Naive thymus-derived CD4-positive, alpha-beta T cell (primary cell): ENCODE measurements at regions of chr19 and their contacts with region 1.

Region 1: DNA sequence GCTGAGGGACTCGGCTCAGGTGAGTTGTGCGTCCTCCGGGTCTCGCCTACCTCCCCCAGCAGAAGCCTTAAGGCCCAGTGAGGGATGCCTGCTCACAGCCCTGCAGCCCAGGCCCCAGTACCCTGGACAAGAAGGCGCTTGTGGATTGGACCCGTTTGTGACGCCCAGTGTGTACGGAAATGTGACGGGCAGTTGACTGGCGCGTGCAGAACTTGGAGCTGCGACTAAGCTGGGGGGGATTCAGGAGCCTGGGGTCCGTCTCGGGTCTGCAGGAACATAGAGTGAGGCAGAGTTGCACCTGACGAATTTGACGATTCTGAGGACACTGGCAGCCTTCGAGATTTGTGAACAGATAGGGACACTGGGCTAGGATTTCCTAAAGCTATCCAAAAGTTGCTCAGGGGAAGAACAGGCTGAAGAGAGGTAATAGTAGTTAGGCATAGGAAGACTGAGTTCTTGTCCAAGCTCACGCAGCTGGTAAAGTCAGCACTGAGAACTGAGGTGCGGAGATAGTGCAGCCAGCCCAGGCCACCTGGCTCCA is 519 bp downstream of the ZNF551 start:
- DNase-seq: no peak
- ATAC-seq: no peak
- H3K4me3 ChIP-seq: peak overlapping the region; percentile 93
- H3K4me3 Mint-ChIP-seq: peak overlapping the region; percentile 89 to 99 (median 97)
- H3K27ac ChIP-seq: peak overlapping the region; percentile 80
- H3K27ac Mint-ChIP-seq: peak overlapping the region; percentile 90 to 98 (median 96)
- H3K4me1 ChIP-seq: peaks cover 9 to 13% of the 10 kb centered on the region in 2 donors
- H3K4me1 Mint-ChIP-seq: peaks cover 25 to 46% (median 39%) of the 10 kb centered on the region in 7 donors
- H3K27me3 ChIP-seq: no peaks in the 10 kb centered on the region
- H3K27me3 Mint-ChIP-seq: peaks cover 2 to 8% (median 7%) of the 10 kb centered on the region in 5 donors

Region 2: GRCh38 chr19:56507446-56508289 is 1174.6 kb before region 1 on chr19 and contains the start of gene ZNF471:
- CTCF ChIA-PET with region 1: no interaction called
- POLR2A ChIA-PET with region 1: no interaction called
- intact Hi-C with region 1: no loop called
- DNase-seq: peak; percentile 44 to 93 (median 82)
- ATAC-seq: peak; percentile 99
- H3K4me3 ChIP-seq: peak within 1 kb of the TSS; percentile 42
- H3K4me3 Mint-ChIP-seq: no peak within 1 kb of the TSS
- H3K27ac ChIP-seq: peak within 1 kb of the TSS; percentile 85
- H3K27ac Mint-ChIP-seq: peak within 1 kb of the TSS in 3 of 9 donors; percentile 3 to 81 (median 10)
- H3K4me1 ChIP-seq: peaks cover 0 to 5% of the 10 kb centered on the region in 2 donors
- H3K4me1 Mint-ChIP-seq: peaks cover 0 to 10% (median 6%) of the 10 kb centered on the region in 7 donors
- H3K27me3 ChIP-seq: no peaks in the 10 kb centered on the region
- H3K27me3 Mint-ChIP-seq: peaks cover 0 to 15% (median 0%) of the 10 kb centered on the region in 5 donors
- total RNA-seq, gene ZNF471: 0.22 to 2.3 (median 1.6) TPM

Region 3: DNA sequence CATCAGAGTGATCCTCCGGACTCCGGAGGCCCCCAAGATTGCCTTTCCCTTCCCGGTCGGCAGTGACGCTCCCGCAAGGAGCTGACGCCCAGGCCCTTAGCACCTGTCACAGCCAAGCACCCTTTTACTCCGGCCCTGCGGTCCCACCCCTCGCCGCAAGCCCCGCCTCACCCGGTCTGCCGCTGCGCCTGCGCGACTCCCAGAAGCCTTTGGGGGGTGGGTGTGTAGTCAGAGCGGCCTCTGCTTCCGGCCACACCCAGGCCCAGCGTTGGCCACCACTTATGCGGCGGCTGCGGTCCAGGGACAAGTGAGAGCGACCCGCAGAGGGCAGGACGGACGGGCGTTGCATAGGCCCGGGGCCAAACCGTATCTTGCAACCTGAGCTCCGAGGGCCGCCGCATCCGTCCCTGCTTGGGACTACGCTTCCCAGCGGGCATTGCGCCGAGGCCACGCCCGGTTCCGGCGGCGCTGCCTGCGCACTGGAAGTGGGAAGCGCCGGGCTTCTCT is 1144.0 kb before region 1 on chr19:
- CTCF ChIA-PET with region 1: no interaction called
- POLR2A ChIA-PET with region 1: no interaction called
- intact Hi-C with region 1: loop called in 1 of 2 experiments (anchors 5 kb)
- DNase-seq: peak; percentile 84 to 94 (median 89)
- ATAC-seq: peak; percentile 94
- H3K4me3 ChIP-seq: peak overlapping the region; percentile 87
- H3K4me3 Mint-ChIP-seq: peak overlapping the region; percentile 88 to 95 (median 93)
- H3K27ac ChIP-seq: peak overlapping the region; percentile 83
- H3K27ac Mint-ChIP-seq: peak overlapping the region; percentile 90 to 97 (median 94)
- H3K4me1 ChIP-seq: peaks cover 5% of the 10 kb centered on the region in 2 donors
- H3K4me1 Mint-ChIP-seq: peaks cover 13 to 27% (median 21%) of the 10 kb centered on the region in 7 donors
- H3K27me3 ChIP-seq: no peaks in the 10 kb centered on the region
- H3K27me3 Mint-ChIP-seq: peaks cover 0 to 4% (median 0%) of the 10 kb centered on the region in 5 donors

Region 4: DNA sequence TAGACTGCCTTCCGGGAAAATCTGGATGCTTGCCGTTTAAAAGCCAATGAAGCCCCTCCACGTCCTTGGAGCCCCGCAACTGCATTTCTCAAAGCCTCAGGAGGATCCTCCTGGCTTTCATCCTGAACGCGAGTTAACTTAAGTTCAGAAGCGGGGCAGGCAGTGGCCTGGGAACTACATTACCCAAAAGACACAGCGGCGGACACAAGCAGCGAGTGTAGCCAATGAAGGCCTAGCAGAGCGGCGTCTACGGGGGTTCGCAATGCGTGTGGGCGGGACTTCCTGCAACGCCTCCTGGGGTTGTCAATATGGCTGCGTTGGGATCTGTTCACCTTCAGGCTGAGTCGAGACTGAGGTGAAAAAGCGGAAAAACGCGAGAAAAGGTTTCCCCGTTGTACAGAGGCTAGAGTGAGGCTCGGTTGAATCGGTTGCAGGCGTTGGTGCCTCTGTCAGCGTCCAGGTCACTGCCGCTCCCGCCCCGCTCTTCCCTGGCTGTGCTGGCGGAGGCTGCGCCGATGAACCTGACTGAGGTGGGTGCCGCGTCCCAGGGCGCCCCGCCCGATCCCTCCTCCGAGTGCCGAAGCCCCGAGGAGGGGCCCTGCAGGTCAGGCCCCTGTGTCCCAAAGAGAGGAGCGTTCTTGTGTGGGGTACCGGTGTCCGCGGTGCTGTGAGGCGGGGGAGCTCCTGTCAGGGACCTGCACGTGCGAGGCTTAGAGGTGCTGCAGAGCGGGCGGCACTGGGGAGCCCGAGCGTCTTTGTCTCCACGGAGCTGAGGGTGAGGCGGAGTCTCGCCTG is 271.2 kb before region 1 on chr19 and contains the start of gene ZNF17:
- CTCF ChIA-PET with region 1: no interaction called
- POLR2A ChIA-PET with region 1: no interaction called
- intact Hi-C with region 1: loop called in 1 of 2 experiments (anchors 1 kb)
- DNase-seq: peak; percentile 72 to 95 (median 88)
- ATAC-seq: peak; percentile 100
- H3K4me3 ChIP-seq: peak within 1 kb of the TSS; percentile 80
- H3K4me3 Mint-ChIP-seq: peak within 1 kb of the TSS; percentile 85 to 97 (median 96)
- H3K27ac ChIP-seq: peak within 1 kb of the TSS; percentile 80
- H3K27ac Mint-ChIP-seq: peak within 1 kb of the TSS; percentile 78 to 96 (median 92)
- H3K4me1 ChIP-seq: peaks cover 3 to 8% of the 10 kb centered on the region in 2 donors
- H3K4me1 Mint-ChIP-seq: peaks cover 20 to 46% (median 34%) of the 10 kb centered on the region in 7 donors
- H3K27me3 ChIP-seq: no peaks in the 10 kb centered on the region
- H3K27me3 Mint-ChIP-seq: no peaks in the 10 kb centered on the region
- total RNA-seq, gene ZNF17: 9.3 to 27.8 (median 17.2) TPM

Region 5: DNA sequence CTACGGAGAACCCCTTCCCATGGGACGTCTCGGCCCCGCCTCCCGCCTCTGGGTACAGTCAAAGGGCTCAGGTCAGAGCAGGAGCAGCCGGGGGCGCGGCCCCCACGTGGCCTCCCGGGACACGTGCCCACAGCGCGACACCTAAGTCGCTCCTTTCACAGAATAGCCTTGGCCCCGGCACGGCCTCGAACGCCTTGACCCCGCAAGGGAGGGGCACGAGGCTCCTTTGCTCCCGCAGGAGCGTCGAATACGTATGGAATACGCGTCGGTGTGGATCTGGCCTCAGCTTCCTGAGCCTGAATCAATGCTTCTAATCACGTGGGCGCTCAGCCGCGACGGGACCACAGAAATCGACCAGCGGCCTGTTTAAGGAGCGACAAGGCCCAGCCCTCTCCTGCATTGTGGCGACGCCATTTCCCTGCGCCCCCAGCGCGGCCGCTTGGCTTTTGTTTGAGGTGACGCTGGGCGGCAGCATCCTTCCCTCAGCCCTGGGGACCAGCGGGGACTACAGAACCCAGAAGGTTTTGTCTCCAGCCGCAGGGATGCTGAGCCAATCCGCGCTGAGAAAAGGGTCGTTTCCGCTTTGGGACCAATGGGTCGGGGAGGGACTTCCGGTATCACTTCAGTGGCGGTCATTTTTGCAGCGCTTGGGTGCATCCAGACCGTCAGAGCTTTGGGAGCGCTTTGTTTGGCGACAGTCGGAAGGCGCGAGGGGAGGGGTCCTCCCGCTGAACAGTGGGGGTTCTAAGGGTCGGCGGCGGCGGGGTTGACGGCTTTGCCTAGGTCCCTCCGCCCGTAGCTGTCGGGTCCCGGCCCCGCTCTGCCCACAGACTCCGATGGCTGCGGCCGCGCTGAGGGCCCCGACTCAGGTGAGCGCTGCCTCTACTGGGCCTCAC is 98.5 kb before region 1 on chr19 and contains the start of gene ZIK1:
- CTCF ChIA-PET with region 1: no interaction called
- POLR2A ChIA-PET with region 1: interaction called, 7 read pairs
- intact Hi-C with region 1: loop called in 1 of 2 experiments (anchors 1 kb)
- DNase-seq: peak; percentile 61 to 91 (median 85)
- ATAC-seq: peak; percentile 93
- H3K4me3 ChIP-seq: peak within 1 kb of the TSS; percentile 55
- H3K4me3 Mint-ChIP-seq: peak within 1 kb of the TSS; percentile 89 to 99 (median 94)
- H3K27ac ChIP-seq: peak within 1 kb of the TSS; percentile 45
- H3K27ac Mint-ChIP-seq: peak within 1 kb of the TSS; percentile 76 to 95 (median 90)
- H3K4me1 ChIP-seq: peaks cover 10 to 12% of the 10 kb centered on the region in 2 donors
- H3K4me1 Mint-ChIP-seq: peaks cover 12 to 28% (median 24%) of the 10 kb centered on the region in 7 donors
- H3K27me3 ChIP-seq: no peaks in the 10 kb centered on the region
- H3K27me3 Mint-ChIP-seq: no peaks in the 10 kb centered on the region
- total RNA-seq, gene ZIK1: 4.8 to 14.1 (median 7.0) TPM

Region 6: DNA sequence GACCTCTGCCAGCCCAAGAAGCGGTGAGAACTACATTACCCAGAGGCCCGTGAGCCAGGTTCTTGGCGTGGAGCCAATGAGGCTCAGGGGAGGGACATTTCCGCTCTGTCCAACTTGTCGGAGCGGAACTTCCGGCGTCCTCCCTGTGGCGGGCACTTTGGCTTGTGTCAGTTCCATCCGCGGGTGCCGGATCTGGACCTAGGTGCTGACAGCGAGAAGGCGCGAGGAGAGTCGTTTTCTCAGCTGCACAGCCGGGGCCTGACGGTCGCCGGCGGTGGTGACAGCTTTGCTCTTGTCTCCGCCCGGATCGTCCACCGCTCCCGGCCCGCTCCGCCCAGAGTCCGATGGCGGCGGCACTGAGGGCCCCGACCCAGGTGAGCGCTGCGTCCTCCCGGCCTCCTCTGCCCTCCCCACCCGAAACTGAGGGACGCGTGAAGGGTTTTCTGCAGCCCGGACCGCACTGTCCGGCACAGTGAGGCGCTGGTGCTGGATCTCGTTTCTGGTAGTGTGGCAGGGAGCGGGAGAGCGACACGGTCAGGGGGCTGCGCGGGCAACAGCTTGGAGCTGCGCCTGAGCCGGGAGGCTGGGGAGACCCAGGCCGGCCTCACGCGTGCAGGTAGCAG is 82.4 kb before region 1 on chr19 and contains the start of gene ZNF530:
- CTCF ChIA-PET with region 1: no interaction called
- POLR2A ChIA-PET with region 1: no interaction called
- intact Hi-C with region 1: no loop called
- DNase-seq: peak; percentile 61 to 81 (median 73)
- ATAC-seq: peak; percentile 97
- H3K4me3 ChIP-seq: peak within 1 kb of the TSS; percentile 87
- H3K4me3 Mint-ChIP-seq: peak within 1 kb of the TSS; percentile 71 to 92 (median 89)
- H3K27ac ChIP-seq: peak within 1 kb of the TSS; percentile 69
- H3K27ac Mint-ChIP-seq: peak within 1 kb of the TSS in 8 of 9 donors; percentile 51 to 90 (median 81)
- H3K4me1 ChIP-seq: peaks cover 10% of the 10 kb centered on the region in 2 donors
- H3K4me1 Mint-ChIP-seq: peaks cover 14 to 28% (median 22%) of the 10 kb centered on the region in 7 donors
- H3K27me3 ChIP-seq: no peaks in the 10 kb centered on the region
- H3K27me3 Mint-ChIP-seq: no peaks in the 10 kb centered on the region
- total RNA-seq, gene ZNF530: 2.0 to 10.9 (median 6.2) TPM

Region 7: DNA sequence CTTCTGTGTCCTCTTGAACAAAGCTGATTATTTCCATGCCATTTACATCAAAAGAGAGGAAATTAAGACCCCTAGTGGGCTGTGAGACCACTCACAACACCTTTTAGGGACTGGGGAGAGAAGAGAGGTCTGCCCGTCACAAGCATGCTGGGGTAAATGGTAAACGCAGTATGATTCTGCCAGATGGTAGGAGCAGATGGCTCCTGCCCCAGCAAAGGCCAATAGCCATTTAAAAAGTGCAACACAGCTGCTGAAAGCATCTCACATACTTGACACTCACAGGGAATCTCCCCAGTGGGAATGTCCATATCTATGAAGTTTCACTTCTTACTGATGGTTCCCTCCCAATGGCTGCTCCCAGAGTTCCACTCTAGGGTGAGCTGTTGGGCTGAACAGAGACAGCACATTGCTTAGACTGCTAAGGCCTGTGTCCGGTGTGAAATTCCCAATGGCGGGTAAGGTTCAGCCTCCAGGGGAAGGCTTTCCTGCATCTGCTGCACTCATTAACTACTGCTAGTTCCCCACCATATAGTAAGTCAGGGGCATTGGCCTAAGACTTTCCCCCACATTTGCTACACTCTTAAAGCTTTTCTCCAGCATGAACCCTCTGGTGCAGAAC is 37.7 kb after region 1 on chr19:
- CTCF ChIA-PET with region 1: no interaction called
- POLR2A ChIA-PET with region 1: no interaction called
- intact Hi-C with region 1: loop called in 1 of 2 experiments (anchors 5 kb)
- DNase-seq: no peak
- ATAC-seq: no peak
- H3K4me3 ChIP-seq: peak overlapping the region; percentile 14
- H3K4me3 Mint-ChIP-seq: no peak overlapping the region
- H3K27ac ChIP-seq: no peak overlapping the region
- H3K27ac Mint-ChIP-seq: no peak overlapping the region
- H3K4me1 ChIP-seq: no peaks in the 10 kb centered on the region
- H3K4me1 Mint-ChIP-seq: peaks cover under 1 to 14% (median 9%) of the 10 kb centered on the region in 7 donors
- H3K27me3 ChIP-seq: no peaks in the 10 kb centered on the region
- H3K27me3 Mint-ChIP-seq: no peaks in the 10 kb centered on the region

Region 8: GRCh38 chr19:57819475-57820148 is 137.3 kb after region 1 on chr19:
- CTCF ChIA-PET with region 1: no interaction called
- POLR2A ChIA-PET with region 1: no interaction called
- intact Hi-C with region 1: loop called (anchors 2 to 5 kb)
- DNase-seq: peak; percentile 45 to 85 (median 79)
- ATAC-seq: peak; percentile 89
- H3K4me3 ChIP-seq: peak overlapping the region; percentile 98
- H3K4me3 Mint-ChIP-seq: peak overlapping the region; percentile 95 to 99 (median 98)
- H3K27ac ChIP-seq: peak overlapping the region; percentile 92
- H3K27ac Mint-ChIP-seq: peak overlapping the region; percentile 88 to 99 (median 95)
- H3K4me1 ChIP-seq: peaks cover 0 to 13% of the 10 kb centered on the region in 2 donors
- H3K4me1 Mint-ChIP-seq: peaks cover 38 to 73% (median 67%) of the 10 kb centered on the region in 7 donors
- H3K27me3 ChIP-seq: no peaks in the 10 kb centered on the region
- H3K27me3 Mint-ChIP-seq: no peaks in the 10 kb centered on the region